ENCODE measurements at regions of chr11 and their contacts with region 1.

Region 1: DNA sequence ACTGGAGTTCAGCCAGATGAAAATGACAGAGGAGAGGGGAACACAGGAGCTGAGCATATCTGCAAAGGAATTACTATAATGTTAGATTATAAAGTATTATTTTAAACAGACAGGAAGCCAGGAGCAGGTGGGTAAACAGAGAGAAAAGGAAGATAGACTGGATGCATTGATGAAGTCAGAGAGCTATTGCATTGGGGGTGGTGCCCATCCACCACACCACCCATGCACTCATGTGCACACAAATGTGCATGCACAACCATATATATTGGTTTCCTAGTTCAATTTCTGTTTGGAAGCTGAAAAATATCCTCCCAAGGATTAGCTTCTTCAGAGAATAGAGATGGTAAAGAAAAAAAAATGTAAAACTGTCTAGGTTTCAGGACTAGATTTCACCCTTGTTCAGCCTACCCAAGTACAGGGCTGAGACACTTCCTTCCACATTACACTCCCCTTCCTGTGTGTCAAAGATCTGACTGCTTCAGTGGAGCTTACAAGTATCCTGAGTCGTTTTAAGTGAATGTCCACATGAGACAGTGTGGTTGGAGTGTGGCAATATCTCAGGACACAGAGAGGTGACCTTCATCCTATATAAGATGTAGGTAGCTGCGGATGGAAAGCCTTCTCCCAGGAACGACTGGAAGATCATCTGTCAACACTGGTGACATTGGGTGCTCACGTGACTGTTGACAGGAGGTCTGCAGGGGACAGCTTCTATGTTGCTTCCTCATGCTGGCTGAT is 12.2 kb upstream of the SMPD1 start:
- DNase-seq: no peak
- ATAC-seq: peak; percentile 58

Region 2: GRCh38 chr11:6307876-6308275 is 70.2 kb before region 1 on chr11:
- intact Hi-C with region 1: no loop called
- DNase-seq: no peak
- ATAC-seq: no peak

Region 3: DNA sequence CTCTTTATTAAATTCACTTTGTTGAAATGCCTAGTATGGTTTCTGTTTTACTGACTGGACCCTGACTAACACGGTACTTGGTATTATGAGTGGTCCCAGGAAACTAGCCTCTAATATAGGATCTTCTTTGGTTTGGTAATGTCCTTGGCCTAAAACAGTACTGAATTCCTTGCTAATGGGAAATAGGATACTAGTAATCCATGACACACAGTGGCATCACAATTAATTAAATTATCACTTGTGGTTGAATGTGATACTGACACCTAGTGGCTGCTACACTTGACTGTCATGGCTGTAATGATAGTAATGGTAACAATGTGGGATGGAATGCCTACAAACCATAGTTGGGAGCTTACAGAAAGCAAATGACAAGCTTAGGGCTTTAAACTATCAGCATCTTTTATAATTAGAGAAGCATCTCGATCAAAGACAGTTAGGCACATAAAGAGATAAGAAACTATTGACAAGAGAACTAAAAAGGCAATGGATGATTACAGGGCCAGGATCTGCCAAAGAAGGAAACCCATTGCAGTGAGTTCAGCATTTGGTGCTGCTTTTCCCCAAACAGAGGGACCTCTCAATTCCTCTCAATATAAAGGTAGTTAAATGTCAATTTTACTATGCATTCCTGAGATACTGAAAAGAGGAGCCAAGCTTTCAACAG is 127.6 kb after region 1 on chr11:
- intact Hi-C with region 1: loop called in 1 of 2 experiments (anchors 5 kb)
- DNase-seq: no peak
- ATAC-seq: peak; percentile 84

Region 4: DNA sequence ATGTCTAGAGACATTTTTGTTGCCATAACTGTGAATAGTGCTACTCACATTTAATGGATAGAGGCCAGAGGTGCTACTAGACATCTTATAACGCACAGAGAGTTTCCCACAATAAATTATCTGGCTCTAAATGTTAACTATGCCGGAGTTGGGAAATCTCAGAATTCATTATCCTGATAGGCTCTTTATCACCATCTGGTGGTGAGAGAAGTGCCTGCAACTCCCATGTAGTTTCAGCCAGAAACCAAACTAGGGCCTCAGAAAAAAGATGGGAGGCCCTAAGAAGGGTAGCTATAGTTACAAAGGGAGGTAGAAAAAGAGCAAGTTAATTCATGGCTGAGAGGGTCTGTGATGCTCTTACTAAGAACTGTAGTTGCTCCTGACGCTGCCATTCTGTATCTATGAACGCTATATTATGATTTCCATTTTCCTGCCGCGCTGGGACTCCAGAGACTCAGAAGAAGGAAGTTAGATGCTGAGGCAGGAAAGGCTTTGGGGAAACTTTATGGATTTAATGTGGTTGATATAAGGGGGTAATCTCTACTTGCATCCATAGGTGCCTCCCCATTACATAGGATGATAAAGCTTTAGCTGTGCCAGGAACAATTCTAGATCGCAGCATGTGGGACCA is 327.9 kb after region 1 on chr11:
- intact Hi-C with region 1: loop called in 1 of 2 experiments (anchors 10 kb)
- DNase-seq: peak in 1 of 2 donors; percentile 44
- ATAC-seq: peak; percentile 49

Measured in left colon (tissue), 2 donors.